Gastrocnemius medialis (tissue), 4 donors: ENCODE measurements at regions of chr2 and their contacts with region 1.

Region 1: GRCh38 chr2:174039551-174040416 is 74.6 kb upstream of the SP3 start:
- DNase-seq: peak; percentile 78 to 87
- ATAC-seq: peak; percentile 81 to 84
- H3K4me3 ChIP-seq: peak overlapping the region in 3 of 4 donors; percentile 15 to 47 (median 34)
- H3K27ac ChIP-seq: peak overlapping the region; percentile 46 to 88 (median 77)
- H3K4me1 ChIP-seq: peaks cover 11 to 36% of the 10 kb centered on the region in 2 donors
- H3K27me3 ChIP-seq: no peaks in the 10 kb centered on the region
- CTCF ChIP-seq: peak; percentile 72 to 86 (median 82)
- POLR2A ChIP-seq: no peak

Region 2: GRCh38 chr2:173210270-173211196 is 829.3 kb before region 1 on chr2:
- in situ Hi-C with region 1: no loop called
- intact Hi-C with region 1: loop called (anchors 10 kb)
- DNase-seq: peak; percentile 88 to 91
- ATAC-seq: peak; percentile 83 to 88
- H3K4me3 ChIP-seq: no peak overlapping the region
- H3K27ac ChIP-seq: peak overlapping the region; percentile 83 to 91 (median 88)
- H3K4me1 ChIP-seq: peaks cover 59 to 84% of the 10 kb centered on the region in 2 donors
- H3K27me3 ChIP-seq: no peaks in the 10 kb centered on the region
- CTCF ChIP-seq: peak; percentile 83 to 96 (median 86)
- POLR2A ChIP-seq: peak in 1 of 2 donors; percentile 24

Region 3: GRCh38 chr2:173590271-173590861 is 449.4 kb before region 1 on chr2:
- in situ Hi-C with region 1: loop called in 2 of 4 experiments (anchors 25 kb)
- intact Hi-C with region 1: no loop called
- DNase-seq: peak; percentile 86 to 89
- ATAC-seq: peak; percentile 91 to 98
- H3K4me3 ChIP-seq: peak overlapping the region; percentile 27 to 44 (median 40)
- H3K27ac ChIP-seq: peak overlapping the region; percentile 81 to 89 (median 88)
- H3K4me1 ChIP-seq: peaks cover 23% of the 10 kb centered on the region in 2 donors
- H3K27me3 ChIP-seq: no peaks in the 10 kb centered on the region
- CTCF ChIP-seq: no peak
- POLR2A ChIP-seq: no peak

Region 4: GRCh38 chr2:173884025-173884802 is 155.6 kb before region 1 on chr2:
- in situ Hi-C with region 1: loop called in 2 of 4 experiments (anchors 10 to 25 kb)
- intact Hi-C with region 1: loop called (anchors 5 kb)
- DNase-seq: peak; percentile 26 to 41
- ATAC-seq: peak in 1 of 2 donors; percentile 66
- H3K4me3 ChIP-seq: no peak overlapping the region
- H3K27ac ChIP-seq: no peak overlapping the region
- H3K4me1 ChIP-seq: peaks cover 0 to 9% of the 10 kb centered on the region in 2 donors
- H3K27me3 ChIP-seq: peaks cover 0 to under 1% (median 0%) of the 10 kb centered on the region in 3 donors
- CTCF ChIP-seq: peak in 4 of 5 experiments; percentile 28 to 66 (median 46)
- POLR2A ChIP-seq: no peak

Region 5: GRCh38 chr2:174023591-174024523 is 15.9 kb before region 1 on chr2:
- in situ Hi-C with region 1: no loop called
- intact Hi-C with region 1: loop called (anchors 1 kb)
- DNase-seq: peak; percentile 81 to 88
- ATAC-seq: peak; percentile 86 to 87
- H3K4me3 ChIP-seq: peak overlapping the region in 3 of 4 donors; percentile 32 to 52 (median 45)
- H3K27ac ChIP-seq: peak overlapping the region; percentile 95 to 99 (median 96)
- H3K4me1 ChIP-seq: peaks cover 23 to 42% of the 10 kb centered on the region in 2 donors
- H3K27me3 ChIP-seq: no peaks in the 10 kb centered on the region
- CTCF ChIP-seq: peak in 1 of 5 experiments; percentile 31
- POLR2A ChIP-seq: peak; percentile 62 to 84